Gastrocnemius medialis (tissue), 4 donors: ENCODE measurements at regions of chr16 and their contacts with region 1.

Region 1: DNA sequence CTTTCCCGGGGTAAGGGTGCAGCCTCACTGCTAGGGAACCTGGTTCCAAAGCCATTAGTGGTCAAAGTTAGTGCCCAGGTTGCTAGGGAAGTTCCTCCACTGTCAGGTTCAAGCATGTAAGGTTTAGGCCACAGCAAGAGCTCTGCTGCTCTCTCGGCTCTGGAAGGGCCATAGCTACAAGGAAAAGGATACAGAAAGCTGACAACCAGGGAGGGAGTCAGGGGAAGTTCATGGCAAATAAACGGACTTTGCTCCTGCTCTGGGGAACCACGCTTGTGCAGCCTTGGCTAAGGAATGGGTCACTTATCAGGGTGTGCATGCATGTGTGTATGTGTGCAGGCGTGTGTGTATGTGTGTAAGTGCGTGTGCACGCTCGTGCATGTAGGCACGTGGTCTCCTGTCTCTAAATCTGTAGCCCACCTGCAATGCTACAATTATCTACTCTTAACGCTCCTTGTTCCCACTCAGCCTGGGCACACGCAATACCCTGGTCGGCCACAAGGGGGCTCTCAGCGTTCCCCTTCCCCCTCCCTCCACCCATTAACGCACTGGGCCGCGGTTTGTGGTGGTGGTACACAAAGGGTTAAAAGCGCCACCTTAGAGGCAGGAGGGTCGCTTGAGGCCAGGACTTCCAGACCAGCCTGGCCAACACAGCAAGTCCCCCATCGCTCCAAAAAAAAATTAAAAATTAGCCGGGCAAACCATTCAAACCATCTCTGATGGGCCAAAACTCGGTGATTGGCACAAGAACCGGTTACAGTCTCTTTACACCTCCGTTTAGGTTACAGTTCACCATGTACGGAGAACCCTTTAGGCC is 48.4 kb upstream of the KDM8 start:
- DNase-seq: peak in 1 of 2 donors; percentile 20
- ATAC-seq: peak in 1 of 2 donors; percentile 14
- H3K4me3 ChIP-seq: no peak overlapping the region
- H3K27ac ChIP-seq: no peak overlapping the region
- H3K4me1 ChIP-seq: no peaks in the 10 kb centered on the region
- H3K27me3 ChIP-seq: no peaks in the 10 kb centered on the region
- CTCF ChIP-seq: peak; percentile 82 to 97 (median 92)
- POLR2A ChIP-seq: no peak

Region 2: GRCh38 chr16:27138266-27138665 is 16.6 kb before region 1 on chr16:
- in situ Hi-C with region 1: no loop called
- intact Hi-C with region 1: no loop called
- DNase-seq: no peak
- ATAC-seq: no peak
- H3K4me3 ChIP-seq: no peak overlapping the region
- H3K27ac ChIP-seq: no peak overlapping the region
- H3K4me1 ChIP-seq: no peaks in the 10 kb centered on the region
- H3K27me3 ChIP-seq: no peaks in the 10 kb centered on the region
- CTCF ChIP-seq: no peak
- POLR2A ChIP-seq: no peak

Region 3: GRCh38 chr16:27169511-27170071 is 14.7 kb after region 1 on chr16:
- in situ Hi-C with region 1: no loop called
- intact Hi-C with region 1: no loop called
- DNase-seq: no peak
- ATAC-seq: no peak
- H3K4me3 ChIP-seq: no peak overlapping the region
- H3K27ac ChIP-seq: no peak overlapping the region
- H3K4me1 ChIP-seq: no peaks in the 10 kb centered on the region
- H3K27me3 ChIP-seq: peaks cover 0 to 4% (median 0%) of the 10 kb centered on the region in 3 donors
- CTCF ChIP-seq: no peak
- POLR2A ChIP-seq: no peak

Region 4: GRCh38 chr16:27217256-27217655 is 62.3 kb after region 1 on chr16:
- in situ Hi-C with region 1: no loop called
- intact Hi-C with region 1: no loop called
- DNase-seq: peak in 1 of 2 donors; percentile 48
- ATAC-seq: peak; percentile 71 to 77
- H3K4me3 ChIP-seq: no peak overlapping the region
- H3K27ac ChIP-seq: peak overlapping the region; percentile 2 to 44 (median 21)
- H3K4me1 ChIP-seq: peaks cover 17 to 25% of the 10 kb centered on the region in 2 donors
- H3K27me3 ChIP-seq: no peaks in the 10 kb centered on the region
- CTCF ChIP-seq: no peak
- POLR2A ChIP-seq: no peak

Region 5: GRCh38 chr16:27461483-27462171 is 306.7 kb after region 1 on chr16:
- in situ Hi-C with region 1: no loop called
- intact Hi-C with region 1: loop called (anchors 1 kb)
- DNase-seq: peak in 1 of 2 donors; percentile 74
- ATAC-seq: peak; percentile 12 to 59
- H3K4me3 ChIP-seq: no peak overlapping the region
- H3K27ac ChIP-seq: peak overlapping the region; percentile 59 to 82 (median 74)
- H3K4me1 ChIP-seq: peaks cover 28 to 34% of the 10 kb centered on the region in 2 donors
- H3K27me3 ChIP-seq: no peaks in the 10 kb centered on the region
- CTCF ChIP-seq: no peak
- POLR2A ChIP-seq: no peak